Activated CD4-positive, alpha-beta memory T cell treated with anti-CD3 and anti-CD28 coated beads for 36 hours (primary cell): ENCODE measurements at regions of chr4 and their contacts with region 1.

Region 1: GRCh38 chr4:879729-880077 is 52.4 kb downstream of the GAK start:
- DNase-seq: peak; percentile 87
- H3K4me3 Mint-ChIP-seq: peak overlapping the region; percentile 68
- H3K27ac Mint-ChIP-seq: peak overlapping the region; percentile 95
- H3K4me1 Mint-ChIP-seq: peaks cover 30% of the 10 kb centered on the region
- H3K27me3 Mint-ChIP-seq: no peaks in the 10 kb centered on the region

Region 2: DNA sequence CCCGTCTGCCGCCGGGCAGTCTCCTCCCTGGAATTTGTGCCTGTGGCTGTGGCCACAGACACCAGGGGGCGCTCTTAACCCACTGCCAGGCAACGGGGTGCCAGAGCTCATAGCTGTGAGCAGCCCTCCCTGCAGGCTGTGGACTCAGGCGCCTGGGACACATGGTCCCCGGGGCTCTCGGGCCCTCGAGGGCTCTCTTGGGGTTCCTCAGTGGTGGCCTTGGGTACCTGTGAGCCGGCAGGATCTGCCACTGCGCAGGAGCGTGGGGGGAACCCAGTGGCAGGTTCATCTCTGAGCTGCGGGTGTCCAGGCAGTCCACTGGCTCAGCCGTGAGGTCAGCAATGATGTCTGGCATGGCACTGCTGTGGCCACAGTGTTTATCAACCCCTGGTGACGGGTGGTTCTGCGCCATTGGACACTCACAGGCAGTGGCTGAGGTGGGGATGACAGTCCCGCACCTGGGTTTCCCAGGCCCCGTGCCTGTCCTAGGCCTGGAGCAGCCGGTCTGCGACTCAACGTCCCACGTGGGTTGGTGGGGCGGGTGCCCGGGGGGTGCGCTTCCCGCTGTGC is 136.9 kb before region 1 on chr4:
- CTCF ChIA-PET with region 1: interaction called, 4 read pairs
- POLR2A ChIA-PET with region 1: no interaction called
- intact Hi-C with region 1: loop called (anchors 2 kb)
- DNase-seq: peak; percentile 85
- H3K4me3 Mint-ChIP-seq: no peak overlapping the region
- H3K27ac Mint-ChIP-seq: no peak overlapping the region
- H3K4me1 Mint-ChIP-seq: no peaks in the 10 kb centered on the region
- H3K27me3 Mint-ChIP-seq: no peaks in the 10 kb centered on the region

Region 3: DNA sequence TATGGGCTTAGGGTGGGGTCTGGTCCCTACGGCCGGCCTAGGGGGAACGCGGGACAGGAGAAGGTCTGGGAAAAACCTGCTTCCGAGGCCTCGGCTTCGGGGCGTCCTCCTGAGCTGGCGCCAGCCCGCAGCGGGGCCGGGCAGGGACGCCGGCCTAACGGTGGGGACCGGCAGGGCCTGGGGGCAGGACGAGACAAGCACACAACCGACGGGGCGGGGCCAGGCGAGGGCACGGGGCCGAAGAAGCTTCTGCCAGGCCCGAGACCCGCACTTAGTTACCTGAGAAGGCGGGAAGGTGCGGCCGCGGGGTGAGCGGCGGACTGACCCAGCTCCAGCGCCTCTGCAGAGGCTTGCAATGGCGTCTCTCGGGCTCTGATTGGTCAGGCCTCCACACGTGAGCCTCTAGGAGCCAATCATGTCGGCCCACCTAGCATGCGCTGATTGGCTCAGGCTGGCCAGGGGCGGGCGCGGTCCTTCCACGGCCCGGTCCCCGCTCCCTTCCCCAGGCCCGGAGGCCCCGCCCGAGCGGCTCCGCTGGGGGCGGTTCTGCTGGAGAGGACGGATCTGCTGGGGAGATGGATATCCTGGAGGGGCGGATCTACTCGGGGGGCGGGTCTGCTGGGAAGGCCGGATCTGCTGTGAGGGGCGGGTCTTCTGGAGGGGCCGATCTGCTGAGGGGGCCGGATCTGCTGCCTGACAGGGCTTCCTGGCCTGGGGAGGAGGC is 98.0 kb before region 1 on chr4:
- CTCF ChIA-PET with region 1: no interaction called
- POLR2A ChIA-PET with region 1: interaction called, 12 read pairs
- intact Hi-C with region 1: loop called (anchors 1 kb)
- DNase-seq: peak; percentile 100
- H3K4me3 Mint-ChIP-seq: peak overlapping the region; percentile 83
- H3K27ac Mint-ChIP-seq: peak overlapping the region; percentile 90
- H3K4me1 Mint-ChIP-seq: peaks cover 47% of the 10 kb centered on the region
- H3K27me3 Mint-ChIP-seq: peaks cover 17% of the 10 kb centered on the region

Region 4: GRCh38 chr4:850323-850950 is 29.3 kb before region 1 on chr4:
- CTCF ChIA-PET with region 1: no interaction called
- POLR2A ChIA-PET with region 1: no interaction called
- intact Hi-C with region 1: no loop called
- DNase-seq: no peak
- H3K4me3 Mint-ChIP-seq: no peak overlapping the region
- H3K27ac Mint-ChIP-seq: no peak overlapping the region
- H3K4me1 Mint-ChIP-seq: no peaks in the 10 kb centered on the region
- H3K27me3 Mint-ChIP-seq: no peaks in the 10 kb centered on the region

Region 5: DNA sequence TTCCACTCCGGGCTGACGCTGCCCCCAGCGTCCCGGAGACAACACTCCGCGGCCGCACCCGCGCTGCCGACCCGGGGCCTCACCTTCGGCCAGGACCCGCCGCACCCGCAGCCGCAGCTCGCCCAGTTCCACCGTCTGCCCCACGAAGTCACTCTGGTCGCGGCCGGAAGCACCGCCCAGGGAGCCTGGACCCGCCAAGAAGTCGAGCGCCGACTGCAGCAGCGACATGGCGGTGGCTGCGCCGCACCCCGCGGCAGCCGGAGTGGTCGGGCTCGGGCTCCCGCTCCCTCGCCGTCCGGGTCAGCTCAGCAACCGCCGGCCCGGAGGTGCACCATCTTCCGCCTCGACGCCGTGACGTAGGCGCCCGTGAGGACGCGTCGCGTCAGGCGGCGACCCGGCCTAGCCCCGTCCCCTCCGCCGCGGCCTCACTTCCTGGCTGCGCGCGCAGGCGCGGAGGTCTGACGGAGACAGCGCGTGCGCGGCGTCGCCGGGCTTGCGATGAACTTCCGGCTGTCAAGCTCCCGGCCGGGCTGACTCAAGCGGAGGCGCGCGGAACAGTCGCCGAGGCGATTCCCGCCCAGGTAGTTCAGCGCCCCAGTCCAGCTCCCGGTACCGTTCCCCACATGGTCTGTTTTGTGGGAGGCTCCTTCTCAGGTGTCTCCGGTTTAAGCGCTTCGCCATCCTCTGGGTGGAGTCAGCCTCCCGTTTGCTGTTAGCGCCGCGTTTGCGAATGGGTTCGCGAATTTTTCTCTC is 52.4 kb after region 1 on chr4 and contains the starts of genes GAK and TMEM175:
- CTCF ChIA-PET with region 1: interaction called, 4 read pairs
- POLR2A ChIA-PET with region 1: interaction called, 10 read pairs
- intact Hi-C with region 1: loop called (anchors 1 kb)
- DNase-seq: peak; percentile 98
- H3K4me3 Mint-ChIP-seq: peak within 1 kb of the TSS; percentile 97
- H3K27ac Mint-ChIP-seq: peak within 1 kb of the TSS; percentile 80
- H3K4me1 Mint-ChIP-seq: peaks cover 43% of the 10 kb centered on the region
- H3K27me3 Mint-ChIP-seq: no peaks in the 10 kb centered on the region
- total RNA-seq, gene GAK: 97.0 to 101 TPM
- total RNA-seq, gene TMEM175: 13.8 to 15.8 TPM

Region 6: DNA sequence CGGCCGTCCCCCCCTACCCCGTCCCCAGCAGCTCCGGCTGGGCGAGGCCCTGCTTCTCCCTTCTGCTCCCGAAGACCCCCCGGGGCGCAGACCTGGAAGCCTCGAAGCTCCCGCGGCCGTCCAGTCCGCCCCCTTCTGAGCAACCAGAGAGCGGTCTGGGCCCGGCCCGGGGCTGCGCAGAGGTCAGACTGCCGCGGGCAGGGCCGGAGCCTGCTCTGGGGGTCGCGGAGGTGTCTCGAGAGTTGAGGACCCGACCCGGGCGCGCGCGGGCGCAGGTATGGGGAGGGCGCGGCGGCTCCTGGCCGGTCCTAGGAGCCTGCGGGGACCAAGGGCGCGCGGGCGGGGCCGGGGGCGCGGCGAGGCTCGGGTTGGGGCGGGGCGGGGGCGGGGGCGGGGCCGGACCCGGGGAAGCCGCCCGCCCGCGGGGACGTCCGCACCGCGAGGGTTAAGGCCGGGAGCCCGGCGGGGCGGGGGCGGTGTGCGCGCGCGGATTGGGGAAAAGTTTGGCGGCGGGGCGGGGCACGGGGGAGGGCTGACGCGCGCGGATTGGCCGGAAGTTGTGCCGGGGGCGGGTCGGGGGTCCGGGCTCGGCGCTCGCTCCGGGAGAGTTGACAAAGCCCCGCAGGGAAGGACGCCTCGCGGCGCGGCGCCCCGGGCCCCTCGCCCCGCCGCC is 131.5 kb after region 1 on chr4 and contains the start of gene FGFRL1:
- CTCF ChIA-PET with region 1: no interaction called
- POLR2A ChIA-PET with region 1: no interaction called
- intact Hi-C with region 1: loop called (anchors 1 kb)
- DNase-seq: peak; percentile 95
- H3K4me3 Mint-ChIP-seq: peak within 1 kb of the TSS; percentile 69
- H3K27ac Mint-ChIP-seq: peak within 1 kb of the TSS; percentile 76
- H3K4me1 Mint-ChIP-seq: peaks cover 10% of the 10 kb centered on the region
- H3K27me3 Mint-ChIP-seq: peaks cover 27% of the 10 kb centered on the region
- total RNA-seq, gene FGFRL1: 12.2 to 15.1 TPM